ENCODE measurements at regions of chr18 and their contacts with region 1.

Region 1: DNA sequence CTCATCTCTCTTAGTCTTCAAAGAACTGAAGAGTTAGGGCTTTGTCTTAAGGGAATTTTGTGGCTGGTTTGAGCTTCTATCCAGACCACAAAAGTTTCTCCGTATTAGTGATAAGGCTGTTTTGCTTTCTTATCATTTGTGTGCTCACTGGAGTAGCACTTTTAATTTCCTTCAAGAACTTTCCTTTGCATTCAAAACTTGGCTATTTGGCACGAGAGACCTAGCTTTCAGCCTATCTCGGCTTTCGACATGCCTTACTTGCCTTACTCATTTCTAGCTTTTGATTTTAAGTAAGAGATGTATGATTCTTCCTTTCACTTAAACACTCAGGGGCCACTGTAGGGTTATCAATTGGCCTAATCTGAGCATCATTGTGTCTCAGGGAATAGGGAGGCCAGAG is 29.9 kb downstream of the HDHD2 start:
- DNase-seq: peak; percentile 12
- H3K4me3 Mint-ChIP-seq: no peak overlapping the region
- H3K27ac Mint-ChIP-seq: no peak overlapping the region
- H3K4me1 Mint-ChIP-seq: peaks cover 28% of the 10 kb centered on the region
- H3K27me3 Mint-ChIP-seq: peaks cover 3% of the 10 kb centered on the region

Region 2: GRCh38 chr18:47087676-47088075 is 32.8 kb before region 1 on chr18:
- intact Hi-C with region 1: no loop called
- DNase-seq: no peak
- H3K4me3 Mint-ChIP-seq: no peak overlapping the region
- H3K27ac Mint-ChIP-seq: no peak overlapping the region
- H3K4me1 Mint-ChIP-seq: no peaks in the 10 kb centered on the region
- H3K27me3 Mint-ChIP-seq: no peaks in the 10 kb centered on the region

Region 3: DNA sequence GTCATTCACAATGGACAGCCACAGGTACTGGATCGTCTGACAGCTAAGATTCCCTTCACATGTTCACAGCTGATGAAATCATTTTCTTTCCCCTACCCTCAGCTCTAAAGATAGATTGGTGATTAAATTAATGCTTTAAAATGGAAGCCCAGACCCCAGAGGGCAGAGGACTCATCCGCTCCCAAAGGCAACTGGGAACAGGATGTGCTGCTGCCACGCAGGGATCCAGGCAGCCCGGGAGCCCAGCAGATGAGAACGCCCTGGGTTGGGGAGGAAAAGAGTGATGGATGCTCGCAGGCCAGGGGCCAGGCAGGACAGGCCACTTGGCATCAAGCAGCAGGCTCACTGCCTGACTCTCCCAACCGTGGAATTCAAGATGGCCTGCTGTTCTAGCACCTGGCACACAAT is 11.4 kb before region 1 on chr18:
- intact Hi-C with region 1: no loop called
- DNase-seq: no peak
- H3K4me3 Mint-ChIP-seq: no peak overlapping the region
- H3K27ac Mint-ChIP-seq: no peak overlapping the region
- H3K4me1 Mint-ChIP-seq: no peaks in the 10 kb centered on the region
- H3K27me3 Mint-ChIP-seq: no peaks in the 10 kb centered on the region

Region 4: DNA sequence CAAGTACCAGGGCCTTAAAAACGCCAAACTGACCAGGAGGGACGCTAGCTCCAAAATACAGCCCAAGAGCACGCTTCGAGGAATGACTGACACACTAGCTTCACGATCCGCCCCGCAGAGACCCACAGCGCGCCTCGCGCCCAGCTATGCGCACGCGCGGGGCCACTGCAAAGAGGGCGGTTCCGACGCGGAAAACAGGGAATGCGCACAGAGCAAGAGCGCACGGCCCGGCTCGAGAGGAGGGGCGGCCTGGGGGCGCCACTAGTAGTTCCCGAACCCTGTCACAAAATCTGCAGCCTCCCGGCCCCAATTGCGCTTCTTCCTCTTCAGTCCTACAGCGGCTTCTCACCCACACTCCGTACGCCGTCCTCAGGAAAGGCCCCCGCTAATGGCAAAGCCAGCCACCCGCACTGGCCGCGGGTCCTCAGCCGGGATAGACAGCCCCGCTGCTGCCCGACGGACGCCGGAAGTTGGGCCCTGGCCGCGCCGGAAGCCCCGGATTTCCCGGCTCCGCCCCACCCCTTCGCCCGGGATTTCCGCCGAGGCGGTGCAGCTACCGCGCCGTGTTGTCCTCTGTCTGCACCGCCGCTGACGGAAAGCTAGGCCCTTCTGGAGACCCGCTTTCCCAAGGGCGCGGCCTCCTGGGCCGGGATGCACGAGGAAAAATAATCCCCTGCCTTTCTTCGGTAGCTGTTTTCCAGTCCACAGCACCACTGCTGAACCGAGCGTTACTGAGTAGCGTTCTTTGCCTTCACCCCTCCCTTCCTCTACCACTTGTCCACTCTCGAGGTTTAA is 29.8 kb after region 1 on chr18 and contains the start of gene HDHD2:
- intact Hi-C with region 1: loop called (anchors 1 kb)
- DNase-seq: peak; percentile 66
- H3K4me3 Mint-ChIP-seq: peak within 1 kb of the TSS; percentile 95
- H3K27ac Mint-ChIP-seq: peak within 1 kb of the TSS; percentile 92
- H3K4me1 Mint-ChIP-seq: peaks cover 26% of the 10 kb centered on the region
- H3K27me3 Mint-ChIP-seq: no peaks in the 10 kb centered on the region
- total RNA-seq, gene HDHD2: 39.3 and 40.8 TPM in 2 replicates

Region 5: GRCh38 chr18:47175908-47176575 is 55.6 kb after region 1 on chr18 and contains the start of gene IER3IP1:
- intact Hi-C with region 1: loop called (anchors 1 kb)
- DNase-seq: peak; percentile 83
- H3K4me3 Mint-ChIP-seq: no peak within 1 kb of the TSS
- H3K27ac Mint-ChIP-seq: peak within 1 kb of the TSS; percentile 71
- H3K4me1 Mint-ChIP-seq: no peaks in the 10 kb centered on the region
- H3K27me3 Mint-ChIP-seq: no peaks in the 10 kb centered on the region
- total RNA-seq, gene IER3IP1: 13.3 and 14.2 TPM in 2 replicates

Region 6: DNA sequence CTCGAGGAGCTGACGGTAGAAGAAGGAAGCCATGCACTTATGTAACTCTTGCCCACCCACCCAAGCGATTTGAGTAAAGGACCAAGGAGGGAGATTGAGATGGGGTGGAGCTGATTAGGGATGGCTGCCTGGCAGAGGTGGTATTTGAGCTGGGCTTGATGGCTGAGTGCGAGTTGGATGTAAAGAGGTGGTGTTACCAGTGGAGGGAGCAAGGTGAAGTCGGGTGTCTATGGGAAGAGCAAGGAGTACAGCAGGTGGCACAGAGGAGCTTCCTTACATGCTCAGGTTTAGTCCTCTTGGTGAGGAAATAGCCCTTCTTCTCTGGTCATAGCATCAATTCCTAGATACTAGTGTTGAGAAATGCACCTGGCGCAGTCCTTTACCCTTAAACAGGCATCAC is 425.2 kb after region 1 on chr18:
- intact Hi-C with region 1: no loop called
- DNase-seq: no peak
- H3K4me3 Mint-ChIP-seq: no peak overlapping the region
- H3K27ac Mint-ChIP-seq: no peak overlapping the region
- H3K4me1 Mint-ChIP-seq: no peaks in the 10 kb centered on the region
- H3K27me3 Mint-ChIP-seq: no peaks in the 10 kb centered on the region

Region 7: DNA sequence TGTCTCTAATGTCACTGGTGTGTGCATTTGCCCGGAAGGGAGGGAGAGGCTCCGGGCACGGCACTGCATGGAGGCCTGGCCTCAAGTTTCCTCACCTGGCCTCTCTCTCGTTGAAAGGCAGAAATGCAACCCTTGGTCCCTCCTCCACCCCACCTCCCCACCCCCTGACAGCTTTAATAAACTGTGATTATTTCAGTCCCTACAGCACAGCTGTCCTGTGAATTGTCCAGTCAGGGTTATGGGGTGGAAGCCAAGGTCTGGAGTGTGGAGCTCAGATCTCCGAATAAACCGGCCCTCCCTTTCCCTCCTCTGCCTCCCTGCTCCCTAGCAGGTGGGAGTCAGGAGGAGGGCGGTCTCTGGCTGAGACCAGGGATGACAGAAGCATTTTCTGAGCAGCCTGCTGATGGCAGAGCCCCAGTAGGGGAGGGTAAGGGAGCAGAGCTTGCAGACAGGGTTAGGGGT is 1009.2 kb after region 1 on chr18:
- intact Hi-C with region 1: loop called (anchors 1 kb)
- DNase-seq: no peak
- H3K4me3 Mint-ChIP-seq: no peak overlapping the region
- H3K27ac Mint-ChIP-seq: no peak overlapping the region
- H3K4me1 Mint-ChIP-seq: peaks cover 25% of the 10 kb centered on the region
- H3K27me3 Mint-ChIP-seq: peaks cover 76% of the 10 kb centered on the region